BJ (cell line): ENCODE measurements at regions of chr3 and their contacts with region 1.

Region 1: GRCh38 chr3:37996785-37997301 is 6.3 kb downstream of the VILL start:
- DNase-seq: no peak
- H3K4me3 ChIP-seq: no peak overlapping the region
- H3K27me3 ChIP-seq: no peaks in the 10 kb centered on the region
- CTCF ChIP-seq: peak; percentile 91

Region 2: DNA sequence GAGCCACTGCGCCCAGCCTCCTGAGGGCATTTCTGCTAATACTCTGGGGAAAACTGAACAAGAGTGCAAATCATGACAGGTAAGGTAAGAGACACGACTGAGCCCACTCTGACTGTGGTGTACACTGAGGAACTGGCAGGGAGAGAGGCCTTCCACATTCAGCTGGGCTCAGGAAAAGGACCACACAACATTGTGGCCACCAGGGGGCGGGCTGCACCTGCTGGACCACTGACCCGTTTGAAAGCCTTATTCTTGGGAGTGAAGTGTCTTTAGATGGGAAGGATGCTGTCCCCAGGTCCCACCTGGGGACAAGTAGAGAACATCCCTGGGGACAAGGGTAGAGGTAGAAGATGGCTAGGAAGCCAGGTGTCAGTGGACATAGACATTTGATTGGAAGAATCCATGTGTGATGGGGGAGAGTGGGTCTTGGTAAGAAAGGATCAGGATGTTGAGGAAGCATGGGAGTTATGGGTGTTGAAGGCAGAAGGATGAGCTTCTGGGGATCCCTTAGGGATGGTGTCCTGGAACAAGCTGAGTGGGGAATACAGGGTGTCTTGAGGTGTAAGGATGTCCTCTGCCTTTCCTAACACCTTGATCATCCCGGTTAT is 141.4 kb before region 1 on chr3:
- CTCF ChIA-PET with region 1: interaction called, 66 read pairs
- POLR2A ChIA-PET with region 1: no interaction called
- DNase-seq: no peak
- H3K4me3 ChIP-seq: no peak overlapping the region
- H3K27me3 ChIP-seq: no peaks in the 10 kb centered on the region
- CTCF ChIP-seq: peak; percentile 85

Region 3: DNA sequence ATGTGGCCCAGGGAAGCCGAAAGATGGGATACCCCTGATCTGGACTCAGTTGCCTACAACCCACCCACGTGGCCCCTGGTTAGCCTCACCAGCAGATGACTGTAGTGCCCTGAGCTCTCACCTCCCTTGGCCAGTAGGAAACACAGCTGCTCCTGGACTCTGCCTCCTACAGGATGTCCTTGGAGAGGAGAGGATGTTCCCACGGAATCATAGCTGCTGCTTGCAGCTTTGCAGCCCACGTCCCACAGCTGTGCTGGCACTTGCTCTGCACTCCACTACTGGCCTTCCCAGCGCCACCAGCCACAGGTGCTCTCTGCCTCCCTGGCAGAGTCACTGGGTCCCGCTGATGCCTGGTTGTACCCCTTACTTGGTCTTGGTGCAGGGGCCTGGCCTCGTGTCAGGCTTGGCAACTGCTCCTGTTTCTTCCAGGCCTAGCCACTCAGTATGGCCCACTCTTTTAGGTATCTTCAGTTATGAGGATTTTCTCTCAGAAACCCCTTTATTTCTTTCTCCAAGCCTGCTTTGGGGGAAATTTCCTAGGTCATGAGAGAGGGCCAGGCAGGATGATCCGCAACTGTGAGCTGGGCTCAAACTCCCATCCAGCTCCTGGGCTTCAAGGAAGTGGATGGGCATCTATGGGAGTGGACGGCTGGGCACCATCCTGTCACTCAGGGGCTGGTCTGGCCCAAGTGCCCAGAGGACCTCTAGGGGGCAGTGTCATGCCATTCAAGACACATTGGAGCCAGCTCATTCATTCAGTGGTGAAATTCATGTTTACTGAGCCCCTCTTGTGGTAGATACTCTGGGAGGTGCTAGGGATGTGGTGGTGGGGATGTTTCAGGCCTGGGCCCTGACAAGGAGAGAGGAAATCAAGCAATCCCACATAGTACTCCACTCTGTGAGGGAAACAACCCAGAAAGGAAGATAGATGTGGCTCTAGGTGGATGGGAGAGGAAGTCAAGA is 22.4 kb before region 1 on chr3:
- CTCF ChIA-PET with region 1: interaction called, 23 read pairs
- POLR2A ChIA-PET with region 1: no interaction called
- DNase-seq: no peak
- H3K4me3 ChIP-seq: no peak overlapping the region
- H3K27me3 ChIP-seq: no peaks in the 10 kb centered on the region
- CTCF ChIP-seq: peak; percentile 79

Region 4: DNA sequence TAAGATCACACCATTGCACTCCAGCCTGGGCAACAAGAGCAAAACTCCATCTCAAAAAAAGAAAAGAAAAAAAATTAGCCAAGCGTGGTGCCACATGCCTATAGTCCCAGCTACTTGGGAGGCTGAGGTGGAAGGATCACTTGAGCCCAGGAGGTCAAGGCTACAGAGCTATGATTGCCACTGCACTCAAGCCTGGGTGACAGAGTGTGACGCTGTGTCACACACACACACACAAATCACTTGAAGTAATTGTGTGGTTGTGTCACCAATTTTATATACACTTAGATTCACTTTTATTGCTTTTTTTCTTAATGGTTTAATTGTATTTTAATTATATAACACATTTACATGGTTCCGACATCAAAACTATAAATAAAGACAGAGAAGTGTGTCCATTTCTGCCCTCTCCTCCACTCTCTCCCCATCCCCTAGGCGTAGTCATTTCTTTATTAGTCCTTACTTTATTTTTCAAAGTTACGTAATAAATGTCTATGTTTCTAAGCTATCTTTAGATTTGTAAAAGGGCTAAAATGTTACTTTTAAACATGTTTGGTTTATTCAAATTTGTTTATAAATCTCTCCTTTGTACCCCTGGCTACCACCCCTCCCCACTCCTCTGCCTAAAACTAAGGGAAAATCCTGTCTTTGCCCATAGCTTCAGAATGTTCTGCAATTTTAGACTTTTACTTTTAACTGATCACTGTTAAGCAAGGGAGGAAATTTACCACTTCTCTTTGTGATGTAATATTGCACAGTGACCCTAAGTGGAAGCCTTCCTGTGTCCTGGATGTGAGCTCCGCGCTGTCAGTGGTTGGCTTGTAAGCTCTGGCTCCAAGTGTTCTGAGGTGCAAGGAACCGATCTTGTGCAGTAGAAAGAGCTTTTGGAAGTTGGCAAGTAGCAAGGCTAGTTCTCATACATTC is 17.0 kb before region 1 on chr3:
- CTCF ChIA-PET with region 1: interaction called, 23 read pairs
- POLR2A ChIA-PET with region 1: no interaction called
- DNase-seq: no peak
- H3K4me3 ChIP-seq: no peak overlapping the region
- H3K27me3 ChIP-seq: no peaks in the 10 kb centered on the region
- CTCF ChIP-seq: no peak

Region 5: DNA sequence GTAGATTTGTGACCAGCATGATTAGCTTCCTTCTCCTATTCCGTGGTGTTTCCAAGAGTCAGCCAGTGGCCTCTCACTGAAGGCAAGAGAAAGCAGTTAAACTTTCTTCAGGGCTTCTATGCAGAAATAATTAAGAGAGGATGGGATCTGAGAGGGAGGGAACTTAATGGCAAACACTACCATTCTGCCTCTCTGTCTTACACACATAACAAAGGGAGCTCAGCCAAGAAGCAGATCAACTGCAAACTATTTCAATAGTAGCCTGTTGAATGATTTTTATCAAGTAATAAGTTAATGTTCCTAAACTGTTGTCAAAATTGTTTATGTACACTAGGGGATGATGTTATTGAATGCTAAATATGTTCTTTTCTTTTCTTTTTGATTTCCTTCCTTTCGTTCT is 180.3 kb after region 1 on chr3:
- CTCF ChIA-PET with region 1: no interaction called
- POLR2A ChIA-PET with region 1: no interaction called
- DNase-seq: no peak
- H3K4me3 ChIP-seq: no peak overlapping the region
- H3K27me3 ChIP-seq: no peaks in the 10 kb centered on the region
- CTCF ChIP-seq: no peak